RWPE1 (cell line): ENCODE measurements at regions of chr15 and their contacts with region 1.

Region 1: DNA sequence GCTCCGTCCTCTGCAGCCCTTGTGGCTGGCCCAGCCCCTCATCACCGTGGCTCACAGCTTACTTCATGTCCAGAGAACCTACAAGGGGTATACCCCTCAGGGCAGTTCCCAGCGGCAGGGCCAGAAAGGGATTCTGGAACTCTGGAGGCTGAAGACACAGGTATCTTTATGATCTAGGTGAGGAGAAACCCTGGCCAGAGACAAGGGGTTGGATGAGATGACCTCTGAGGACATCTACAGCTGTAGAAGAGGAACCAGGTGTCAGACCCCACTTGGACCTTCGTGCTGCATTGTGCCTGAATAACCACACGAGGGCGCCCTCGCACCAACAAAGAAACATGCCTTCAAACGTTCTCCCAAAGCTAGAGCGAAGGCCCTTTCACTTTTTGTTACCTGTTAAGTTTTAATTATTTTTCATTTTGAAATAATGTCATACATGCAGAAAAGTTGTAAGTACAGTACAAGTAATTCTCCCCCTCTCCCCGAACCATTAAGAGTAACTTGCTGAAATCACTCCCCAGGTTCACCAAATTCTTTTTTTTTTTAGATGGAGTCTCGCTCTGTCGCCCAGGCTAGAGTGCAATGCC is 118.7 kb upstream of the SMAD3 start:
- DNase-seq: peak; percentile 82
- H3K27ac ChIP-seq: no peak overlapping the region
- CTCF ChIP-seq: peak; percentile 97

Region 2: GRCh38 chr15:65086017-65086679 is 1860.5 kb before region 1 on chr15:
- CTCF ChIA-PET with region 1: no interaction called
- POLR2A ChIA-PET with region 1: no interaction called
- DNase-seq: peak; percentile 20
- H3K27ac ChIP-seq: no peak overlapping the region
- CTCF ChIP-seq: peak; percentile 27; the same call in 1 of the 2 replicates

Region 3: DNA sequence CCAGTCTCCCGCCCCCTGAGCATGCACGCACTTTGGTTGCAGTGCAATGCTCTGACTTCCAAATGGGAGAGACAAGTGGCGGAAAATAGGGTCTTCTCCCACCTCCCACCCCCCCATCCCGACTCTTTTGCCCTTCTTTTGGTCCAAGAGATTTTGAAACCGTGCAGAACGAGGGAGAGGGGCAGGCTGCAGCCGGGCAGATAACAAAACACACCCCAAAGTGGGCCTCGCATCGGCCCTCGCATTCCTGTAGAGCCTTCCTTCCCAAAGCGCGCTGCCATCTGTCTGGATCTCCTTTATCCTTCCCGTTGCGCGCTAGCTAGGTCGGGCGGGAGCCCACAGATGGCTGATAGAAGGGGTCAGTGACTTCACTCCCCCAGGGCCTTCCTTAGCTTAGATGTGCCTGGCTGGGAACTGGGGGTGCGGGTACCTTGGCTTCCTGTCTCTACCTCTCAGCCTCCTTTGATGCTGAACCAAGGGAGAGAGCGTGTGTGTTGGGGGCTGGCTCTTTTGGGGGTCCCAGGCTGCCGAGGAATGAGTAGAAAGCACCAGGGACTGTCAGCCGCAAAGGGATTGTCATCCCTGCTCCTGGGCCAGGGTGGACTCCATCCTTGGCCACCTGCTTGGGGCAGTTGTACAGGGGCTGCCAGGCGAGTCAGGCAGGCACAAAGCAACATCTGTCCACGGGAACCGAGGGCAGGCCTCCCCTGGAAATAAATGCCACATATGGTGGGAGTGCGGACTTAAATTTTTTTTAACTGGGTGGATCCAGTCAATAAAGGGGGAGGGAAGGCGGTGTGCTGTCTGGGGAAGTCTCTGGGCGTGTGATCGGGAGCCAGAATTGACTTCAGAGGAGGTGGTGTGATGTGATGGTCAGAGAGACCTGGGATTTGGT is 120.5 kb after region 1 on chr15:
- CTCF ChIA-PET with region 1: interaction called, 20 read pairs
- POLR2A ChIA-PET with region 1: no interaction called
- DNase-seq: no peak
- H3K27ac ChIP-seq: peak overlapping the region; percentile 86
- CTCF ChIP-seq: no peak

Region 4: GRCh38 chr15:67303490-67304363 is 357.1 kb after region 1 on chr15:
- CTCF ChIA-PET with region 1: interaction called, 22 read pairs
- POLR2A ChIA-PET with region 1: no interaction called
- DNase-seq: peak; percentile 55
- H3K27ac ChIP-seq: no peak overlapping the region
- CTCF ChIP-seq: peak; percentile 73